Left ventricle myocardium inferior (tissue), 1 donor: ENCODE measurements at regions of chr12 and their contacts with region 1.

Region 1: GRCh38 chr12:5083955-5084849 is 40.5 kb downstream of the KCNA5 start:
- DNase-seq: no peak
- H3K4me3 ChIP-seq: no peak overlapping the region
- H3K27ac ChIP-seq: no peak overlapping the region
- H3K4me1 ChIP-seq: peaks cover 7% of the 10 kb centered on the region
- H3K27me3 ChIP-seq: peaks cover 16% of the 10 kb centered on the region
- CTCF ChIP-seq: peak; percentile 84

Region 2: DNA sequence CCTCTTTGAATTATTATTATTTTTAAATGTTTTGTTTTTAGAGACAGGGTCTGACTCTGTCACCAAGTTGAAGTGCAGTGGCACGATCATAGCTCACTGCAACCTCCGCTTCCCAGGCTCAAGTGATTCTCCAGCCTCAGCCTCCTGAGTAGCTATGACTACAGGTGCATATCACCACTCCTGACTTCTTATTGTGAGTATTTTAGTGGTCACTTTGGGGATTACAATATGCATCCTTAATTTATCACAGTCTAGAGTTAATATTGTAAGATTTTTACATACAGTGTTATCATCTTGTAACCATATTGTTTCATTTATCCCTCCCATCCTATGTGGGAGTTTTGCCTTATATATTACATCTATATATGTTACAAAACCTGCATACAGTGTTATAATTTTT is 718.1 kb before region 1 on chr12:
- intact Hi-C with region 1: no loop called
- DNase-seq: no peak
- H3K4me3 ChIP-seq: no peak overlapping the region
- H3K27ac ChIP-seq: no peak overlapping the region
- H3K4me1 ChIP-seq: no peaks in the 10 kb centered on the region
- H3K27me3 ChIP-seq: peaks cover 3% of the 10 kb centered on the region
- CTCF ChIP-seq: no peak

Region 3: DNA sequence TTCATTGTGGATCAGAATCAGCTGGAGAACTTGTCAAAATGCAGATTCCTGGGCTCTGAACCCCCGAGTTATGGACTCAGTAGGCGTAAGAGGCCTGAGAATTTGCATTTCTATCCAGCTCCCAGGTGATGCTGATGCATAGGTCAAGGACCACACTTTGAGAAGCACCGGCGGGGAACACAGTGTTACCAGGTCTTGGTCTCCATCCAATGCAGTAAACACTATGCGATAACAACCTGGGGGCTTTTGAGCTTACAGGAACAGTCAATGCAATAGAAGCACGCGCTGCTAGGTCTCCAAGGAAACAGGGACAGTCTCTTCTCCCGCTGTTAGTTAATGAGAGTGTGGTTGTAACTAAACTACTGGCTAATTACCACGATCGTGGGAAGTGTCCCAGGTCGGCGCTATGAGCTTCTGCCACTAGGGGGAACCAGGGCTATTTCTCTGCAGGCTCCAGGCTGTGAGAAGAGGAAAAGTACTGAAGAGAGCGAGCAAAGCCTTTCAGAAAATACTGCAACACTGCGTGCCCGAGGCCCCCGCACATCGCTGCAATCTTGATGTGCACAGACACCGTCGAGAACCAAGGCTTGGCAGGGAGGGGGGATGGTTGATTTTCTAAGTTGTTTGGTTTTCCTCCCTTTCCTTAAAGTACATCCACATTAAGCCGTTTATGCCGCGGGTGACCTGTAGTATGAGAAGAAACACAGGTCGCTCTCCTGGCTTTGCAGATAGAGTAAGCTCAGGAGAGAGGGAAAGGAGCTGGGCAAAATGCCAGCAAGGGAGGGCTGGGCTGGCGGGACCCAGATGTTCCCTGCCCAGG is 226.5 kb before region 1 on chr12:
- intact Hi-C with region 1: loop called (anchors 10 kb)
- DNase-seq: peak; percentile 62
- H3K4me3 ChIP-seq: peak overlapping the region; percentile 46
- H3K27ac ChIP-seq: peak overlapping the region; percentile 20
- H3K4me1 ChIP-seq: peaks cover 32% of the 10 kb centered on the region
- H3K27me3 ChIP-seq: peaks cover 32% of the 10 kb centered on the region
- CTCF ChIP-seq: peak; percentile 93

Region 4: DNA sequence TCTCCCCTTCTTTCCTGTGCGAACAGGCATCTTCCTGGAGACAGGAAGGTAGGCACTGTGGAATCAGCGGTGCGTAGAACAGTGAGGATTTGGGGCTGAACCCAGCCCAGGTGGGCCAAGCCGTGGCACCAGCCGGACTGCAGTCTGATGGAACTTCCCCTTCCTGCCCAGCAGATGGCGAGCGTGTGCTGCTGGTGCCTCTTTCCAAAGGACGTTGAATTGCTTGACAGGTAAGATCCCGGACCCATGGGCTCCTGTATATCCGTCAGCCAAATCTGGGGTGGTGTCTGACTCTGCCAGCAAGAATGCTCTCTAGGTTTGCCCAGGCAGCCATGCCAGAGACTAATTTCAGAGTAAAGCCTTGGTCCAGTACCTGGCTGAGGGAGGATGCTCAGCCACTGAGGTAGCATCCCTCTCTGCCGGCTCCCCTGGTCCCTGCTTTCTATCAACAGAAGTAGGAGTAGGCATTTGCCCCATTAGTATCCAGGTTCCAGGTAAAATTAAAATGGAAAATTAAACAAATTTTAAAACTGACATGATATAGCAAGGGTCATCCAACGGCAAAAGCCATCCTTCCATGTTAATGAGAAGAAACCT is 61.6 kb before region 1 on chr12:
- intact Hi-C with region 1: loop called (anchors 2 kb)
- DNase-seq: no peak
- H3K4me3 ChIP-seq: no peak overlapping the region
- H3K27ac ChIP-seq: no peak overlapping the region
- H3K4me1 ChIP-seq: peaks cover 21% of the 10 kb centered on the region
- H3K27me3 ChIP-seq: no peaks in the 10 kb centered on the region
- CTCF ChIP-seq: peak; percentile 97